ENCODE measurements at regions of chr22 and their contacts with region 1.

Region 1: GRCh38 chr22:43993027-43993760 is 30.9 kb upstream of the PARVB start:
- DNase-seq: peak; percentile 38 to 82
- H3K4me3 ChIP-seq: no peak overlapping the region
- H3K27ac ChIP-seq: no peak overlapping the region
- H3K4me1 ChIP-seq: peaks cover 0 to 2% (median 1%) of the 10 kb centered on the region in 4 experiments; a peak in 3 of 7 replicates
- H3K27me3 ChIP-seq: no peaks in the 10 kb centered on the region
- CTCF ChIP-seq: peak; percentile 93 to 97 (median 95)
- EP300 ChIP-seq: no peak
- POLR2A ChIP-seq: no peak
- RAD21 ChIP-seq: peak; percentile 94 to 95

Region 2: GRCh38 chr22:43867839-43868652 is 125.1 kb before region 1 on chr22:
- CTCF ChIA-PET with region 1: no interaction called
- POLR2A ChIA-PET with region 1: no interaction called
- DNase-seq: peak; percentile 71 to 93
- H3K4me3 ChIP-seq: peak overlapping the region in 2 of 4 experiments; percentile 5 to 46; a peak in 3 of 8 replicates
- H3K27ac ChIP-seq: no peak overlapping the region
- H3K4me1 ChIP-seq: peaks cover 0 to 5% (median 2%) of the 10 kb centered on the region in 4 experiments; a peak in 4 of 7 replicates
- H3K27me3 ChIP-seq: no peaks in the 10 kb centered on the region
- CTCF ChIP-seq: no peak
- EP300 ChIP-seq: no peak
- POLR2A ChIP-seq: no peak
- RAD21 ChIP-seq: no peak; a peak in 1 of 4 replicates

Region 3: DNA sequence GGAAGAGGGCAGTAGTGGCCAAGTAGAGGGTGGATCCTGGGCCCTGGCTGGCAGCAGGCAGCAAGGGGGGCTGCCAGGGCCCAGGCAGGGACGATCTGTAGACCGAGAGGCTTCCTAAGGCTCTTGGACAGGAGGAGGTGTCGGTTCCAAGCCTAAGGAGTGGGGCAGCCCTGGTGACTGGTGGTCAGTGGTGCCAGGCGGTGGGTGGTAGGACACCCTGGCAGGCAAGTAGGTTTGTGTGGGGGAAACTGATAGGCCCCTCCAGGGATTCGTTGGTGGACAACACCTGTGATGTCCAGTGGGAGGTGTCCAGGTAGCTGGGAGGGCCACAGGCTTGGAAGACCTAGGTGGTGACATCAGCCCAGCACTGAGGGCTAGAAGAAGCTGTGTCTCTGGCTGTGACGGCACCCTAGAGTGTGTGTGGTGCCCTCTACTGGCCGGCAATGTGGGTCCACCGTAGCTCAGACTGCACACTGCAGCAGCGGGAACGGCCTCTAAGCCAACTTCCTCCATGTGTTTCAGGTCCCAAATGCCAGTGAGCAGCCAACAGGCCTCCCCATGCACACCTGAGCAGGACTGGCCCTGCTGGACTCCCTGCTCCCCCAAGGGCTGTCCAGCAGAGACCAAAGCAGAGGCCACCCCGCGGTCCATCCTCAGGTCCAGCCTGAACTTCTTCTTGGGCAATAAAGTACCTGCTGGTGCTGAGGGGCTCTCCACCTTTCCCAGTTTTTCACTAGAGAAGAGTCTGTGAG is 47.4 kb before region 1 on chr22:
- CTCF ChIA-PET with region 1: interaction called, 11 read pairs
- POLR2A ChIA-PET with region 1: no interaction called
- DNase-seq: peak in 1 of 2 experiments; percentile 83
- H3K4me3 ChIP-seq: no peak overlapping the region
- H3K27ac ChIP-seq: no peak overlapping the region
- H3K4me1 ChIP-seq: no peaks in the 10 kb centered on the region
- H3K27me3 ChIP-seq: no peaks in the 10 kb centered on the region
- CTCF ChIP-seq: peak; percentile 82 to 97 (median 94)
- EP300 ChIP-seq: no peak
- POLR2A ChIP-seq: no peak
- RAD21 ChIP-seq: peak; percentile 42 to 62; a peak in 3 of 4 replicates

Region 4: GRCh38 chr22:43976861-43977795 is 16.1 kb before region 1 on chr22:
- CTCF ChIA-PET with region 1: interaction called, 13 read pairs
- POLR2A ChIA-PET with region 1: interaction called, 3 read pairs
- DNase-seq: no peak
- H3K4me3 ChIP-seq: no peak overlapping the region
- H3K27ac ChIP-seq: no peak overlapping the region
- H3K4me1 ChIP-seq: no peaks in the 10 kb centered on the region
- H3K27me3 ChIP-seq: no peaks in the 10 kb centered on the region
- CTCF ChIP-seq: peak in 2 of 3 experiments; percentile 2 to 32; a peak in 2 of 4 replicates
- EP300 ChIP-seq: no peak
- POLR2A ChIP-seq: no peak
- RAD21 ChIP-seq: no peak

Region 5: GRCh38 chr22:44003405-44004103 is 10.4 kb after region 1 on chr22:
- CTCF ChIA-PET with region 1: interaction called, 43 read pairs
- POLR2A ChIA-PET with region 1: no interaction called
- DNase-seq: peak in 1 of 2 experiments; percentile 62
- H3K4me3 ChIP-seq: no peak overlapping the region
- H3K27ac ChIP-seq: no peak overlapping the region
- H3K4me1 ChIP-seq: no peaks in the 10 kb centered on the region
- H3K27me3 ChIP-seq: no peaks in the 10 kb centered on the region; a peak in 1 of 7 replicates
- CTCF ChIP-seq: peak; percentile 53 to 69 (median 59)
- EP300 ChIP-seq: no peak
- POLR2A ChIP-seq: no peak
- RAD21 ChIP-seq: peak; percentile 56 to 61

Region 6: DNA sequence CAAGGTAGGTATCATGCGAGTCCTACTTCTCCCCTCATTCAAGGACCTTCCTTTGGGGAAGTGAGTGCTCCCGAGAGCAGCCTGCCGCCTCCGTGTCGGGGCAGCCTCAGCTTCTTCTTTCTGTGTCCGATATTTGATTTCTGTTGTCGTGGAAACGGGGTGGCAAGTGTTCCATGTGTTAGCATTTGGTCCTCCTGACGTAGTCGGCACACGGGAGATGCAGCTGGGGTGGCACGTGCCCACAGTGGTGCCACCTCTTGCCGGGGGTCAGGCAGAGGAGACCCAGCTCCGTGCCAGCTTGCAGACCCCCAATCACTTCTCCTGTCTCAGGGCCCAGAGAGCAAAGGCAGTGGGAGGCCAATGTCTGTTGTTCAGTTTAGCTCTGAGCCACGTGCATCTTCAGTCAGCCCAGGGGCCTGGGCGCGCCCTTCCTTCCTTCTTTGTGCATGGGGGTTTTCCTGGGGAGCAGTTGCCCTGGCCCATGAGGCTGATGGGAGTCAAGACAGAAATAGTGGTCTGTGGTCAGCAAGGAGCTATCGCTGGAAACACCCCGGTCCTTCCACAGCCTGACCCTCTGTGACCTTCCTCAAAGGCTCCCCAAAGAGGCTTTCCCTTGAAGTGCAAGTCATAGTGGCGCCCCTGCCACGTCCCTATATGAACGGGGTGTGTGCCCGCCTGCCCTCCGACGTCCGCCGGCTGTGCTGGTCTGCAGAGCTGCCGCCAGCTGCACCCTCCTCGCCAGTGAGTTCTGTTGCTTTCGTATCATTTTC is 75.4 kb after region 1 on chr22:
- CTCF ChIA-PET with region 1: interaction called, 13 read pairs
- POLR2A ChIA-PET with region 1: no interaction called
- DNase-seq: no peak
- H3K4me3 ChIP-seq: no peak overlapping the region
- H3K27ac ChIP-seq: no peak overlapping the region
- H3K4me1 ChIP-seq: peaks cover 0 to 10% (median 7%) of the 10 kb centered on the region in 4 experiments; a peak in 5 of 7 replicates
- H3K27me3 ChIP-seq: no peaks in the 10 kb centered on the region
- CTCF ChIP-seq: no peak
- EP300 ChIP-seq: no peak
- POLR2A ChIP-seq: no peak
- RAD21 ChIP-seq: no peak

Region 7: DNA sequence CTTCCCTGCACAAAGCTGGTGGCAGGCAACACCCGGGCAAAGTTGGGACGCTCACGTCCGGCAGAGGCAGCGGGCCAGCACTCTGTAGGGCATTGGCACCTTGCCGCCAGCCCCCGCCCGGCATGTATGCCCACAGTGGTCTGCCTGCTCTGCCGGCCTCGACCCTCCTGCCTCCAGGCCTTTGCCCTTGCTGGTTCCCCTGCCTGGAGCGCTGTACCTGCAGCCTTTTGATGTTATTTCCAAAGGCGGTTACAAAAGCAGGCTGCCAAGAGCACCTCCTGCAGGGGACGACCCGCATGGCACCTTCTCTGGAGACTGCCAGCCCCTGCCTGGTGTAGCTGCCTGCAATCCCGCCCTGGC is 376.1 kb after region 1 on chr22:
- CTCF ChIA-PET with region 1: interaction called, 10 read pairs
- POLR2A ChIA-PET with region 1: no interaction called
- DNase-seq: peak; percentile 31 to 92
- H3K4me3 ChIP-seq: no peak overlapping the region
- H3K27ac ChIP-seq: no peak overlapping the region
- H3K4me1 ChIP-seq: no peaks in the 10 kb centered on the region; a peak in 3 of 7 replicates
- H3K27me3 ChIP-seq: 0 out of 7 replicates have a peak, but pooled peaks cover 0 to under 1% (median 0%) of the 10 kb centered on the region in 4 experiments
- CTCF ChIP-seq: peak; percentile 74 to 87 (median 86)
- EP300 ChIP-seq: no peak
- POLR2A ChIP-seq: no peak
- RAD21 ChIP-seq: peak; percentile 72 to 81

Region 8: DNA sequence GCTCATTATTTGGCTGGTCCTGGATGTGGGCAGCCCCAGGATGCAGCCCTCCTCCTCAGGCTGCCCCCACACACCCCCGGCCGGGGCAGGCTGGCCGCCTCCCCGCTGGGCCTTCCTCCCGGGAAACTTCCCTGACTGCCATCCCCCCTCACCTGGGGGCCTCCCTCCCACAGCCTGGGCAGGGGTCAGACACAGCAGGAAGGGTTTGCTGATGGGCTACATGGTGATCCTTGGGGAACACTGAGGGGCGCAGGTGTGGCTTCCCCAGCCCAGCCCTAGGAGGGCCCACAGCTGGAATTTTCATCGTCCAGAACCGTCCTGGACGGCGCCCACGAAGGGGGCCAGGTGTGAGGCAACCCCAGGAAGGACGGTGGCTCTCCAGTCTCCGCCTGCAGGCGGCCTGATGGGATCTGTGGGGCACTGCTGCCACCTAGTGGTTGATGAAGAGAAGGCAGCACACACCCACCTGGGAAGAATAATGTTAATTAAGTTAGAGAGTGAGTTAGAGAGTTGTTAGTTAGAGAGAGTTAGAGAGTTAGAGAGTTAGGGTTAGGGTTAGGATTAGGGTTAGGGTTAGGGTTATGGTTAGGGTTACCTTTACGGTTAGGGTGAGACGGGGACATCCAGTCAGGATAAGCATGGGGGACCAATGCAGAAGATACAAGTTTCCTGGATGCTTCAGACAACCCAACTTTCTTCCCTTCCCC is 632.9 kb after region 1 on chr22:
- CTCF ChIA-PET with region 1: interaction called, 69 read pairs
- POLR2A ChIA-PET with region 1: no interaction called
- DNase-seq: peak; percentile 31 to 93
- H3K4me3 ChIP-seq: no peak overlapping the region
- H3K27ac ChIP-seq: no peak overlapping the region
- H3K4me1 ChIP-seq: peaks cover 0 to 6% (median 0%) of the 10 kb centered on the region in 4 experiments; a peak in 1 of 7 replicates
- H3K27me3 ChIP-seq: peaks cover 19 to 54% (median 52%) of the 10 kb centered on the region in 4 experiments
- CTCF ChIP-seq: peak; percentile 85 to 99 (median 90)
- EP300 ChIP-seq: no peak
- POLR2A ChIP-seq: no peak
- RAD21 ChIP-seq: peak; percentile 99 to 100